ENCODE measurements at regions of chr1 and their contacts with region 1.

Region 1: DNA sequence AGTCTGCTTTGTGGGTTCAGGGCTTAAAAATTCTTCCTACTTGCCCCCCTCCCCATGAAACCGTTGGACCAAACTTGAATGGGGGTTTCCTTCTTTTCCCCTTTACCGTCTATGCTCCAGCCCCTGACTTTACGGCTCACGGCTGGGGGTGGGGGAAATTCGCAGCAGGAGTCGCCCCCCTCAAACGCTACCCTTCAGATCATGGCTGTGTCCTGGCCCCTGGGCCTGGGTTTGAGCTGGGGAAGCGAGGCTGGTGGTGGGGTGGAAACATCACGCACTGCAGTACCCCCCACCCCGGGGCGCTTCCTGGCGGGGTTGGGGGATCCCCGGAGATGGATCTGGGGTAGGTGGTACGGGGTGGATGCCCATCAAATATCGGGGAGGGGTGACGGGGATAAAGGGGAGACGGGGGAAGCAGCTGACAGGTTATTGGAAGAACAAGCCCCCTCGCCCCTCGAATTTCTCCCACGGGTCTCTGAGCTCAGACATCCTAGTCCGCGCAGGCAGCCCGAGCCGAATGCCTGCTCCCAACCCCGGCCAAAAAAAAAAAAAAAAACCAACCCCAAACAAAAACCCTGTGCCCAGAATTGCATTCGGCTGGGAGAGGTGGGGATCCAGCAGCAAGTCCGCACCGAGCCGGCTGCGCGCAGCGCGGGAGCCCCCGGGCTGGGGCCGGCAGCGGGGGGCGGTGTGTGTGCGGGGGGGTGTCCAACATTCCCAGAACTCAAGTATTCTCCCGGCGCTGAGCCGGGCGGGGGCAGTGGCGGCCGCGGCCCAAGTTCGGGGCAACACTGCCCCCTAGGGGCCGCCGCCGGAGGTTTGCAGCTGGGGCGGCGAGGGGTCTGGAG is 59.0 kb upstream of the ACOT11 start:
- DNase-seq: peak; percentile 77 to 90
- H3K4me3 ChIP-seq: peak overlapping the region; percentile 61 to 62
- H3K27ac ChIP-seq: peak overlapping the region; percentile 90 to 99
- H3K4me1 ChIP-seq: peaks cover 0 to 40% (median 26%) of the 10 kb centered on the region in 4 donors
- H3K27me3 ChIP-seq: no peaks in the 10 kb centered on the region
- CTCF ChIP-seq: peak; percentile 94 to 96

Region 2: DNA sequence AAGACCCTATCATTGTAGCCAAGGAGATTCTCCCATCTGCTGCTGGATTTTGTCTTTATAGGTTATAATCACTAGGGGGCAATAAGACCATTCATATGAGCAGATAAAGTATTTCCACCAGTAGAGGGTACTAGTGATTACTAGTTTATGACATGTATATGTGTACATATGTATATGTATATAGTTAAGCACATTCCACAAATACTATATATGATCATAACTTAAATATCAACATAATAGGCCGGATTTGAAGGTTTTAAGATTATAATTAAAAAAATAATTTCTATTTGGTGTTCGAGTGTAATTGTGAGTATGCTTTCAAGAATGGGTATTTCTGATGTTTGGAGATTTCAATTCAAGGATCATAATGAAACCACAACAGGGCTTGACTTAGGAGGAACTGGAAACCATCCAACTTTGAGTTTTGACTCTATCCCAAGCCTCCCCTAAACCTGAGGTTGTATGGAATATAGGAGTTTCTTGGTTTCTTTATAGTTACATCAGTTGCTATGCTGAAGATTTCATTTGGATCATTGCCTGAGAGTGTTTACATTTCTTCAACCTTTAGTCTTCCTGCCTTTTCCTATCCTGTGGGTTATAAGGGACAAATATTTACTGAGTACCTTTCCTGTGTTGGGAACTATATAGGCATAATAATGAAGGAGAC is 418.7 kb before region 1 on chr1:
- intact Hi-C with region 1: loop called (anchors 10 kb)
- DNase-seq: no peak
- H3K4me3 ChIP-seq: no peak overlapping the region
- H3K27ac ChIP-seq: no peak overlapping the region
- H3K4me1 ChIP-seq: no peaks in the 10 kb centered on the region
- H3K27me3 ChIP-seq: no peaks in the 10 kb centered on the region
- CTCF ChIP-seq: peak; percentile 69 to 74

Region 3: GRCh38 chr1:54121482-54122134 is 367.4 kb before region 1 on chr1:
- intact Hi-C with region 1: loop called (anchors 2 kb)
- DNase-seq: peak; percentile 66 to 85
- H3K4me3 ChIP-seq: peak overlapping the region; percentile 10 to 38
- H3K27ac ChIP-seq: peak overlapping the region in 1 of 2 donors; percentile 5
- H3K4me1 ChIP-seq: peaks cover 0 to 13% (median 6%) of the 10 kb centered on the region in 4 donors
- H3K27me3 ChIP-seq: peaks cover 0 to 6% of the 10 kb centered on the region in 2 donors
- CTCF ChIP-seq: peak; percentile 76 to 79

Region 4: DNA sequence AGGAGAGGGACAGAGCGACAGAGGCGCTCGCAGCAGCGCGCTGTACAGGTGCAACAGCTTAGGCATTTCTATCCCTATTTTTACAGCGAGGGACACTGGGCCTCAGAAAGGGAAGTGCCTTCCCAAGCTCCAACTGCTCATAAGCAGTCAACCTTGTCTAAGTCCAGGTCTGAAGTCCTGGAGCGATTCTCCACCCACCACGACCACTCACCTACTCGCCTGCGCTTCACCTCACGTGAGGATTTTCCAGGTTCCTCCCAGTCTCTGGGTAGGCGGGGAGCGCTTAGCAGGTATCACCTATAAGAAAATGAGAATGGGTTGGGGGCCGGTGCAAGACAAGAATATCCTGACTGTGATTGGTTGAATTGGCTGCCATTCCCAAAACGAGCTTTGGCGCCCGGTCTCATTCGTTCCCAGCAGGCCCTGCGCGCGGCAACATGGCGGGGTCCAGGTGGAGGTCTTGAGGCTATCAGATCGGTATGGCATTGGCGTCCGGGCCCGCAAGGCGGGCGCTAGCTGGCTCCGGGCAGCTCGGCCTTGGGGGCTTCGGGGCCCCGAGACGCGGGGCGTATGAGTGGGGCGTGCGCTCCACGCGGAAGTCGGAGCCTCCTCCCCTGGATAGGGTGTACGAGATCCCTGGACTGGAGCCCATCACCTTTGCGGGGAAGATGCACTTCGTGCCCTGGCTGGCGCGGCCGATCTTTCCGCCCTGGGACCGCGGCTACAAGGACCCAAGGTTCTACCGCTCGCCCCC is 289.1 kb before region 1 on chr1 and contains the starts of genes CYB5RL and MRPL37:
- intact Hi-C with region 1: loop called (anchors 2 kb)
- DNase-seq: peak; percentile 95
- H3K4me3 ChIP-seq: peak within 1 kb of the TSS; percentile 72 to 90
- H3K27ac ChIP-seq: peak within 1 kb of the TSS; percentile 78 to 79
- H3K4me1 ChIP-seq: peaks cover 0 to 28% (median 16%) of the 10 kb centered on the region in 4 donors
- H3K27me3 ChIP-seq: no peaks in the 10 kb centered on the region
- CTCF ChIP-seq: no peak

Region 5: GRCh38 chr1:54227091-54227602 is 261.9 kb before region 1 on chr1:
- intact Hi-C with region 1: loop called (anchors 10 kb)
- DNase-seq: peak; percentile 63 to 88
- H3K4me3 ChIP-seq: no peak overlapping the region
- H3K27ac ChIP-seq: peak overlapping the region; percentile 56 to 74
- H3K4me1 ChIP-seq: peaks cover 0 to 30% (median 22%) of the 10 kb centered on the region in 4 donors
- H3K27me3 ChIP-seq: no peaks in the 10 kb centered on the region
- CTCF ChIP-seq: no peak

Region 6: DNA sequence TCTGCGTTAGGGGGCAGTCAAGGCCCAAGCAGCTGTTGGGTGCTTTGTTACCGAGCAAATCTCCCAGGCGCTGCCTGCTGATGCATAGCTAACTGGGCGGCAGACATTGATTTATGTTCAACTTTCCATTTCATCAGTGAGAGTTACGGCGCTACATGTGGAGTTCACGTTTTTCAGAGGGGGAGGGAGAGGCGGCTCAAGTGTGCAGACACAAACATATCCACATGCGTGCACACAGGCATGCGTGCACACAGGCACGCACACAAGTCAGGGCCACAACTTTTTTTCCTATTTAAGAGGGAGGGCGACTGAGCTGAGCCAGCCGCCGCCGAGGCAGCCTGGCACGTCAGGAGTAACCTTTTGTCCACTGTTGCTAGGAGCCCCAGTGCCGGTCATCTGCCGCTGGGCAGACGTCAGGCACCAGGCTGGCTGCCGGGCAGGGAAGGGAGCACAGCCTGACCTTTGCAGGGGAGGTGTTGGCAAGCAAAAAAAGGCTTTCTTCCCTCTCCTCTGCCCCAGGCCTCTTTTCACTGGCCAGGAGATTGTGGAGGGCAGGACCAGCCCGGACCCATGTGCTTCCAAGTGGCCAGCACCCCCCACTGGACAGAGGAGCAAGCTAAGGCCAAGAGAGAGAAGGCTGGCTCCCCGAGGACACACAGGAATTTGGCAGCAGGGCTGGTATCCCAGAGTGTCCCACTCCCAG is 215.8 kb before region 1 on chr1:
- intact Hi-C with region 1: loop called (anchors 5 kb)
- DNase-seq: peak; percentile 80 to 97
- H3K4me3 ChIP-seq: peak overlapping the region in 1 of 2 donors; percentile 26
- H3K27ac ChIP-seq: peak overlapping the region; percentile 87 to 98
- H3K4me1 ChIP-seq: peaks cover 23 to 100% (median 82%) of the 10 kb centered on the region in 4 donors
- H3K27me3 ChIP-seq: no peaks in the 10 kb centered on the region
- CTCF ChIP-seq: peak; percentile 68 to 73

Region 7: GRCh38 chr1:54406339-54407153 is 82.5 kb before region 1 on chr1 and contains the start of gene SSBP3:
- intact Hi-C with region 1: loop called (anchors 1 kb)
- DNase-seq: peak; percentile 82 to 95
- H3K4me3 ChIP-seq: peak within 1 kb of the TSS; percentile 83 to 84
- H3K27ac ChIP-seq: peak within 1 kb of the TSS; percentile 84 to 89
- H3K4me1 ChIP-seq: peaks cover 0 to 48% (median 31%) of the 10 kb centered on the region in 4 donors
- H3K27me3 ChIP-seq: no peaks in the 10 kb centered on the region
- CTCF ChIP-seq: peak in 1 of 2 experiments; percentile 20

Region 8: GRCh38 chr1:54564312-54565112 is 75.5 kb after region 1 on chr1:
- intact Hi-C with region 1: no loop called
- DNase-seq: no peak
- H3K4me3 ChIP-seq: no peak overlapping the region
- H3K27ac ChIP-seq: no peak overlapping the region
- H3K4me1 ChIP-seq: peaks cover 0 to 20% (median 11%) of the 10 kb centered on the region in 4 donors
- H3K27me3 ChIP-seq: no peaks in the 10 kb centered on the region
- CTCF ChIP-seq: no peak

Region 9: GRCh38 chr1:54950369-54951163 is 461.6 kb after region 1 on chr1:
- intact Hi-C with region 1: no loop called
- DNase-seq: peak; percentile 76 to 84
- H3K4me3 ChIP-seq: peak overlapping the region; percentile 18 to 23
- H3K27ac ChIP-seq: peak overlapping the region; percentile 41 to 55
- H3K4me1 ChIP-seq: peaks cover 0 to 23% (median 15%) of the 10 kb centered on the region in 4 donors
- H3K27me3 ChIP-seq: no peaks in the 10 kb centered on the region
- CTCF ChIP-seq: peak; percentile 78 to 90

Region 10: DNA sequence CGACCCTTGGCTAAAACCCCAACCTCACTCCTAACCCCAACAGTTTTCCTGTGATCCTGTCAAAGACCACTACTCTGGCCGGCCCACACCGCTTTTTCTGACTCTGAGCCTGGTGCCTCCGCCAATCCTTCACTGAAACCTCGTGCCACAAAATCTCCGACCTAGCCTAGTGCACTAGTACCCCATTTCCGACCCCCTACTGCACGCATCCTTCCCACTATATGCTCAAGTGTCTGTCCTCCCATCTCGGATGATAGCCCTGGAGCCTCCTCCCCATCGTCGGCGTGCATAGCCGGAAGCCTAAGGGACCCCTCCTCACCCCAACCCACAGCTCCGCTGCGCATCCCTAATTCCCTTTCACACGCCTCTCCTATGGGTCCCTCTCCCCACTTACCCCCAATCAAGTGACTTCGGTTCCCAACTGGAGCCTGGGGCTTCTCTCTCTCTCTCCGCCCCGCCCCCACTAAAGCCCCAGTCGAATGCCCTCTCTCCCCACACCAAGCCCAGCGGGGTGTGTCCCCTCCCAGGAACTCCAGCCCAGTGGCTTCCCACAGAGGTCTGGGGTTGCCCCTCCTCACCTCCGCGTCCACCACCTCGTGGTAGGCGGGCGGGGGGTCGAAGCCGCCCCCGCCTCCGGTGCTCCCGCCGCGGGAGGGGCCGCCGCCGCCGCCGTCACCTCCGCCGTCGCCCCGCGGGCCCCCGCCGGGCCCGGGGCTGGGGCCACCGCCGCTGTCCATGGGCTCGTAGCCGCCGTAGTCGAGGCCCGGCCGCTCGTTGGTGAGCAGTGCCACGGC is 725.4 kb after region 1 on chr1:
- intact Hi-C with region 1: no loop called
- DNase-seq: peak; percentile 53 to 69
- H3K4me3 ChIP-seq: peak overlapping the region; percentile 84 to 93
- H3K27ac ChIP-seq: peak overlapping the region; percentile 97
- H3K4me1 ChIP-seq: peaks cover 0 to 53% (median 29%) of the 10 kb centered on the region in 4 donors
- H3K27me3 ChIP-seq: no peaks in the 10 kb centered on the region
- CTCF ChIP-seq: no peak

Measured in tibial artery (tissue), 4 donors.